ENCODE measurements at regions of chr4 and their contacts with region 1.

Region 1: DNA sequence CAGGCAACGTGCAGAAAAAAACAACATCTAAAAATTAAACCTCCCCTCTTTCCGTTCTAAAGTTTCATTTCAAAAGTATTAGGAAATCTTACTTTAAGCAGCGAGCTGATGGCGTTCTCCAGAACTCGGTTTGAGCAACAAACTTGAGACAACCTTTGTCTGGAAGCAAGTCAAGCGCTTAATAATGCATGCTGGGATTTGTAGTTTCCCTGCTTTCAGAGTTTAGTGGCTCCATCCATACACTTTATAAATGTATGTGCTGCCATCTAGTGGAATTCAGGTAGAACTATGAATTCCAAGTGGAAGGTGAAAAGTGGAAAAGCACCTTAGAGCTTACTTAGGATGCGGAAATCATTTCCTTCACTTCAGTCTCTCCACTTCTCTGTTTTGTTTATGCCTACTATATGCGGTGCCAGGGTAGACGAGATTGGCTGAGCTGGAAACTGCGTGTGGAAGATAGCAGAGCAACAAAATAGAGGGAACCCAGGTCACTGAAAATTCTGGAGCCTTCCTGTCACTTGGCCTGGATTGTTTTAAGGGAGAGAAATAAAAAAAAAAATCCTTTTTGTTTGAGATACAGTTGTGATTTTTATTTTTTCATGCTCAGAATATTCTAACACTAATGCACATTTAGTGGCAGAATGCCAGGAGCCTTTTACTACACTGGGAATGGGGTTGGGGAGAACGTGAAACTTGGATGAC is at the start of gene BDH2:
- DNase-seq: peak in 1 of 2 donors; percentile 79
- H3K4me3 ChIP-seq: peak within 1 kb of the TSS; percentile 52 to 54
- H3K27ac ChIP-seq: peak within 1 kb of the TSS; percentile 63 to 69
- H3K4me1 ChIP-seq: peaks cover 4 to 17% of the 10 kb centered on the region in 2 donors
- H3K27me3 ChIP-seq: no peaks in the 10 kb centered on the region
- CTCF ChIP-seq: peak; percentile 66 to 83 (median 73)
- total RNA-seq, gene BDH2: 13.9 TPM

Region 2: GRCh38 chr4:102449751-102450352 is 650.0 kb before region 1 on chr4:
- intact Hi-C with region 1: loop called (anchors 5 kb)
- DNase-seq: no peak
- H3K4me3 ChIP-seq: no peak overlapping the region
- H3K27ac ChIP-seq: no peak overlapping the region
- H3K4me1 ChIP-seq: no peaks in the 10 kb centered on the region
- H3K27me3 ChIP-seq: no peaks in the 10 kb centered on the region
- CTCF ChIP-seq: peak; percentile 35 to 64 (median 44)

Region 3: GRCh38 chr4:102500696-102501446 is 599.0 kb before region 1 on chr4 and contains the start of gene NFKB1:
- intact Hi-C with region 1: loop called (anchors 5 kb)
- DNase-seq: peak; percentile 19 to 82
- H3K4me3 ChIP-seq: peak within 1 kb of the TSS; percentile 88 to 98
- H3K27ac ChIP-seq: peak within 1 kb of the TSS; percentile 93 to 99
- H3K4me1 ChIP-seq: peaks cover 0 to 20% of the 10 kb centered on the region in 2 donors
- H3K27me3 ChIP-seq: no peaks in the 10 kb centered on the region
- CTCF ChIP-seq: no peak
- total RNA-seq, gene NFKB1: 34.5 TPM

Region 4: GRCh38 chr4:102868781-102869568 is 230.9 kb before region 1 on chr4 and contains the start of gene CISD2:
- intact Hi-C with region 1: loop called (anchors 10 kb)
- DNase-seq: peak; percentile 71 to 95
- H3K4me3 ChIP-seq: peak within 1 kb of the TSS; percentile 76 to 86
- H3K27ac ChIP-seq: peak within 1 kb of the TSS; percentile 96 to 98
- H3K4me1 ChIP-seq: peaks cover 6 to 16% of the 10 kb centered on the region in 2 donors
- H3K27me3 ChIP-seq: no peaks in the 10 kb centered on the region
- CTCF ChIP-seq: peak in 1 of 3 experiments; percentile 2
- total RNA-seq, gene CISD2: 10.4 TPM

Region 5: DNA sequence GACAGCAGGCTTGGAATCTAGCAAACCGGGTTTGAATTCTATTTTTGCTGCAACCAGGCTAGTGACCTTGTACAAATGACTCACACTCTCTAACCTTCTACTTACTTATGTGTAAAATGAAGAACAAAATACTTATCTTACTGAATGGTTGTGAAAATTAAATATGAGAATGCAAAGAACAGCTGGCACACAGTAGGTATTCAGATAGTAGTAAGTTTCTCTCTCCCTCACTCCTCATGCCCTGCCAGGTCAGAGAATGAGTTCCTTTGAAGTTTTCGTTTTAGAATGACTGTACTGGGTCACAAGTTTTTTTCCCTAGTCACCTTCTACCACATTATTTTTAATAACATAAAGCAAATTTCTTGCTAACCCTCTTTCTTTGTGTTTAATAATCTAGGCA is 198.0 kb before region 1 on chr4:
- intact Hi-C with region 1: no loop called
- DNase-seq: no peak
- H3K4me3 ChIP-seq: no peak overlapping the region
- H3K27ac ChIP-seq: no peak overlapping the region
- H3K4me1 ChIP-seq: no peaks in the 10 kb centered on the region
- H3K27me3 ChIP-seq: no peaks in the 10 kb centered on the region
- CTCF ChIP-seq: no peak

Region 6: GRCh38 chr4:103075901-103076739 is 23.7 kb before region 1 on chr4:
- intact Hi-C with region 1: loop called (anchors 2 kb)
- DNase-seq: peak in 1 of 2 donors; percentile 78
- H3K4me3 ChIP-seq: peak overlapping the region; percentile 58 to 85
- H3K27ac ChIP-seq: peak overlapping the region; percentile 89 to 91
- H3K4me1 ChIP-seq: peaks cover 3 to 9% of the 10 kb centered on the region in 2 donors
- H3K27me3 ChIP-seq: no peaks in the 10 kb centered on the region
- CTCF ChIP-seq: peak in 1 of 3 experiments; percentile 17

Measured in ascending aorta (tissue), 2 donors.